ENCODE measurements at regions of chr1 and their contacts with region 1.

Region 1: DNA sequence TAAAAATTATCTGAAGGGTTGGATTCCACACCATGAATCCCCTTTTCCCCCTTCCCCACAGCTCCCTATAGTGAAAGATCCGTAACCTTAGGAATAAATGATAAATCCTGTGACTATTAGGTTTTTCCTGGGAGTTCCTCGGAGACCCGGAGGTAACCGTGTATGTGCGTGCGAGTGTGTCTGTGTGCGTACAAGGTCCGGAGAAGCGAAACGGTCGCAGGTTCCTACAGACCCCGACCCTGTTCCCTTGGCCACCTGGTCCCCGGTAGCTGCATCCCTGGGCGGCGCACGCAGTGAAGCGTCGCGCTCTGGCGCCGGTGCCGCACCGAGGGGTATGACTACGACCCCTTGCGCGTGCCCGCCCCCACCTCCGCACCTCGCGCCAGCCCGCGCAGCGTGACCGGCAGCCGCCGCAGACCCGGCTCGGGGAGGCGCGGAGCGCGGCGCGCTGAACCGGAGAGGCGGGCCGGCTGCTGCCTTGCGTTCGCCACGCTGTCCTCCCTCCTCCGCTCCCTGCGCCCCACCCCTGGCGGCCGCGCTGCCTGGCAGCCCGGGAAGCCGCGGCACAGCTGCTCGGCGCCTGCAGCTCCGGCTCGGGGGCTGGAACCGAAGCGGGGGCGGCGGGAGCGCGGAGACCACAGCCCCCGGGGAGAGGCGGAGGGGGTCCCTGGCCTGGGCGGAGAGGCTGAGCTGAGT is at the start of gene AK5:
- DNase-seq: peak; percentile 58
- H3K4me3 Mint-ChIP-seq: peak within 1 kb of the TSS; percentile 75
- H3K27ac Mint-ChIP-seq: no peak within 1 kb of the TSS
- H3K4me1 Mint-ChIP-seq: peaks cover 37% of the 10 kb centered on the region
- H3K27me3 Mint-ChIP-seq: no peaks in the 10 kb centered on the region
- total RNA-seq, gene AK5: 7.0 to 9.1 TPM

Region 2: DNA sequence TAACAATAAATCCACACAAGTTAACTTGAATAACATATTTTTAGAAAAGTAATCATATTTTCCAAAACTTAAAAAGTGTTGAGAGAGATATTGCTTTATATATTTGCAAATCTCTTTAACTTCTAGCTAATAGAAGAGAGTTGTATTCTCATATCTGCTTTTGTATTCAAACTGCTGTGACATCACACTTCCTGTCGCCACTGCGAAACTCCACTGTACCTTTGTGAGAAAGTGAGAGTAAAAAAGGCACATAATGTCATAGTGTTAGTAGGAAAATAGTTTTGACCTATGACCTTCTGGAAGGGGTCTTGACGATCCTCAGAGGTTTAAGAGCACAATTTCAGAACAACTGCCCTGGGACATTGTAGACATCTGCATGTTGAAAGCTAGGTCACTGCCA is 21.7 kb after region 1 on chr1:
- CTCF ChIA-PET with region 1: interaction called, 3 read pairs
- intact Hi-C with region 1: loop called (anchors 1 kb)
- DNase-seq: peak; percentile 64
- H3K4me3 Mint-ChIP-seq: no peak overlapping the region
- H3K27ac Mint-ChIP-seq: peak overlapping the region; percentile 63
- H3K4me1 Mint-ChIP-seq: peaks cover 39% of the 10 kb centered on the region
- H3K27me3 Mint-ChIP-seq: no peaks in the 10 kb centered on the region

Region 3: GRCh38 chr1:77430966-77431690 is 149.5 kb after region 1 on chr1:
- CTCF ChIA-PET with region 1: interaction called, 3 read pairs
- intact Hi-C with region 1: loop called (anchors 2 kb)
- DNase-seq: no peak
- H3K4me3 Mint-ChIP-seq: no peak overlapping the region
- H3K27ac Mint-ChIP-seq: no peak overlapping the region
- H3K4me1 Mint-ChIP-seq: peaks cover 28% of the 10 kb centered on the region
- H3K27me3 Mint-ChIP-seq: no peaks in the 10 kb centered on the region